Vagina (tissue), 2 donors: ENCODE measurements at regions of chr4 and their contacts with region 1.

Region 1: GRCh38 chr4:81704461-81704860 is 232.8 kb upstream of the RASGEF1B start:
- DNase-seq: no peak
- H3K4me3 ChIP-seq: no peak overlapping the region
- H3K27ac ChIP-seq: no peak overlapping the region
- H3K4me1 ChIP-seq: no peaks in the 10 kb centered on the region
- H3K27me3 ChIP-seq: no peaks in the 10 kb centered on the region
- CTCF ChIP-seq: no peak
- POLR2A ChIP-seq: no peak

Region 2: GRCh38 chr4:80731996-80732395 is 972.5 kb before region 1 on chr4:
- intact Hi-C with region 1: loop called (anchors 10 kb)
- DNase-seq: no peak
- H3K4me3 ChIP-seq: no peak overlapping the region
- H3K27ac ChIP-seq: no peak overlapping the region
- H3K4me1 ChIP-seq: no peaks in the 10 kb centered on the region
- H3K27me3 ChIP-seq: no peaks in the 10 kb centered on the region
- CTCF ChIP-seq: no peak
- POLR2A ChIP-seq: no peak